Stomach (tissue), 19 donors: ENCODE measurements at regions of chr15 and their contacts with region 1.

Region 1: DNA sequence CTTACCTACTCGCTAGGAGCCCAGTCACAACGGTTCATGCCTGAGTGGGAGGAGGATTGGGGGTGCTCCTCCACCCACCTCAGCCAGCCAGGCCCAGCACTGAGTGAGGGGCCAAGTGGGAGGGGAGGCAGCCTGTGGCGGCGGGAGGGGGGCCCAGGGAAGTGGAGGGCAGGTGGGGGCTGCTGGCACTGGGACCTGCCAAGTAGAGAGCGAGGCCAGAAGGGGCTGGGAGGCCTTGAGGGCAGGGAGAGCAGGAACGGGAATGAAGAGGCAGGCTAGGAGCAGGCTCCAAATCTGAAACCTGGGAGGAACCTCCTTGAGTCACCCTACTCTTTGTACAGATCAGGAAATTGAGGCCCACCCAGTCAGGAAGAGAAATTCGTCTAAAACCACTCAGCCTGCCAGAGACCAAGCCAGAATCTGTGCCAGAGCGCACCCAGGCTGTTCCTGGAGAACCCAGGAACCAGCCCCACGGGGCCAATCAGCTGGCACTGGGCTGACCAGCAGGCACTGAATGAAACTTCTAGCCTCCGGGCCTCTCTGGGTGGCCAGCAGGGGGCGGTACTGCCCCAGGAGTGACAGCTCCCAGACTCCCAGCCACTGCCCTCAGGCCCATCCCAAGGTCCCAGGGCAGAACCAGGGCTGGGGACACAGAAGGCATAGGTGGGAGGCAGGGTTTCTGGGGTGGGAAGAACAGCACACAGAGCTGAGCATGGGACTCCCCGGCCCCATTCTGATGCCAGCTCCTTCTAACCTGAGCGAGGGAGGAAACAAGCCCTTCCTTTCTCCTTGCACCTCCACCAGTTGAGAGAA is 14.8 kb upstream of the CYP11A1 start:
- DNase-seq: peak; percentile 91 to 94
- H3K4me3 ChIP-seq: no peak overlapping the region
- H3K27ac ChIP-seq: no peak overlapping the region
- H3K4me1 ChIP-seq: peaks cover 5 to 42% (median 14%) of the 10 kb centered on the region in 4 donors
- H3K27me3 ChIP-seq: peaks cover 0 to 16% (median 0%) of the 10 kb centered on the region in 3 donors
- CTCF ChIP-seq: peak in 6 of 7 experiments; percentile 79 to 97 (median 92)
- EP300 ChIP-seq: no peak
- POLR2A ChIP-seq: no peak

Region 2: DNA sequence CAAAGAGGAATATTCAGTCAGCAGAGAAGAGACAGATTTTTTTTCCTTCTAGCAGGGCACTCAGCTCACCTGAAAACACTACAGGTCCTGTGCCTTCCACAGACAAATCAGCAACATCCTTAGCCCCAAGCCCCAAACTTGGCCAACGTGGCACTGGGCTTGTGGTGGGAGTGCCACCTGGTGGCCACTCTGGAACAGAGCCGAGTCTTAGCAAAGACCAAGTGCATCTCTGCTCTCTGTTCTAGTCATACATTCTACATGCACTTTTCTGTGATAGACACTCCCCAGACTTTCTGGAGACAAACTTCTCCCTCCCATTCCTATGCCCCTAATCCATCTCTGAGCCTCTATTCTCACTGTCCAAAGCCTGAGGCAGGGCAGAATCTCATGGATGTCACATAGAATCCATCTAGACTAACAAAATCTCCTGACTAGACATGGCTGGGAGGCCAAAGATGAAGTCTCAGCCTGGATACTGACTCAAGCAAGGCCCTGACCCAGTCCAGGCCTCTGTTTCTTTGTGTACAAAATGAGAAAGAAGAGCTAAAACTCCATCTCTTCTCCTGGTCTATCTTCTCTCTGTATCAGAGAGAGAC is 56.6 kb after region 1 on chr15:
- intact Hi-C with region 1: loop called (anchors 2 kb)
- DNase-seq: peak; percentile 77 to 91
- H3K4me3 ChIP-seq: no peak overlapping the region
- H3K27ac ChIP-seq: no peak overlapping the region
- H3K4me1 ChIP-seq: peaks cover 10 to 21% (median 18%) of the 10 kb centered on the region in 4 donors
- H3K27me3 ChIP-seq: no peaks in the 10 kb centered on the region
- CTCF ChIP-seq: peak in 6 of 7 experiments; percentile 78 to 91 (median 84)
- EP300 ChIP-seq: no peak
- POLR2A ChIP-seq: no peak

Region 3: DNA sequence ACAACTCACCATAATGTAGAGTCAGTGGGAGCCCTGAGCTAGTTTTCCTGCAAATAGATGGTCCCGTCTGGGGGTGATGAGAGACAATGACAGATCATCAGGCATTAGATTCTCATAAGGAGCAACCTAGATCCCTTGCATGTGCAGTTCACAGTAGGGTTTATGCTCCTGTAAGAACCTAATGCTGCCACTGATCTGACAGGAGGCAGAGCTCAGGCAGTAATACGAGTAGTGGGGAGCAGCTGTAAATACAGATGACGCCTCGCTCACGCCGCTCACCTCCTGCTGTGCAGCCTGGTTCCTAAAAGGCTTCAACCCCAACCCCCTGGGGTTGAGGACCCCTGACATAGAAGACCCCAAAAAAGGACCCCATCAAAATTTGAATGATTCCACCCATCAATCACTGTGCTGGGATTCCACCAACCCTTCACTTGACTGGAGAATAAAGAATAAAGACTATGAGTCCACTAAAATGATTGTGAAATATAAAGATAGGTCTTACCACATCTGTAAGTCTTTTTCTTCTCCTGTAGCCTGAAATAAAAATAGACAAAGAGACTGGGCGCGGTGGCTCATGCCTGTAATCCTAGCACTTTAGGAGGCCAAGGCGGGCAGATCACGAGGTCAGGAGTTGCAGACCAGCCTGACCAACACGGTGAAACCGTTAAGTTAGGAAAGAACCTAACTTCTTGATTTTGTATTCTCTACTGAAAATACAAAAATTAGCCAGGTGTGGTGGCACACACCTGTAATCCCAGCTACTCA is 88.6 kb after region 1 on chr15:
- intact Hi-C with region 1: no loop called
- DNase-seq: no peak
- H3K4me3 ChIP-seq: no peak overlapping the region
- H3K27ac ChIP-seq: no peak overlapping the region
- H3K4me1 ChIP-seq: no peaks in the 10 kb centered on the region
- H3K27me3 ChIP-seq: no peaks in the 10 kb centered on the region
- CTCF ChIP-seq: no peak
- EP300 ChIP-seq: no peak
- POLR2A ChIP-seq: no peak